ENCODE measurements at regions of chr1 and their contacts with region 1.

Region 1: GRCh38 chr1:227486559-227486958 is 76.8 kb upstream of the ZNF678 start:
- DNase-seq: peak; percentile 17
- ATAC-seq: no peak
- H3K4me3 ChIP-seq: no peak overlapping the region
- H3K4me3 Mint-ChIP-seq: no peak overlapping the region
- H3K27ac ChIP-seq: no peak overlapping the region
- H3K27ac Mint-ChIP-seq: no peak overlapping the region
- H3K4me1 ChIP-seq: no peaks in the 10 kb centered on the region
- H3K4me1 Mint-ChIP-seq: no peaks in the 10 kb centered on the region
- H3K27me3 ChIP-seq: no peaks in the 10 kb centered on the region
- H3K27me3 Mint-ChIP-seq: peaks cover 3% of the 10 kb centered on the region
- CTCF ChIP-seq: no peak

Region 2: GRCh38 chr1:227542143-227543120 is 55.9 kb after region 1 on chr1:
- CTCF ChIA-PET with region 1: interaction called, 8 read pairs
- POLR2A ChIA-PET with region 1: no interaction called
- intact Hi-C with region 1: loop called (anchors 1 kb)
- DNase-seq: peak; percentile 89
- ATAC-seq: peak; percentile 96
- H3K4me3 ChIP-seq: peak overlapping the region; percentile 7 to 69 (median 63)
- H3K4me3 Mint-ChIP-seq: peak overlapping the region; percentile 73
- H3K27ac ChIP-seq: peak overlapping the region in 1 of 2 donors; percentile 16
- H3K27ac Mint-ChIP-seq: no peak overlapping the region
- H3K4me1 ChIP-seq: peaks cover 0 to 16% of the 10 kb centered on the region in 2 donors
- H3K4me1 Mint-ChIP-seq: peaks cover 3% of the 10 kb centered on the region
- H3K27me3 ChIP-seq: no peaks in the 10 kb centered on the region
- H3K27me3 Mint-ChIP-seq: no peaks in the 10 kb centered on the region
- CTCF ChIP-seq: peak; percentile 99

Region 3: GRCh38 chr1:227954163-227954850 is 467.7 kb after region 1 on chr1:
- CTCF ChIA-PET with region 1: interaction called, 8 read pairs
- POLR2A ChIA-PET with region 1: no interaction called
- intact Hi-C with region 1: loop called (anchors 2 kb)
- DNase-seq: no peak
- ATAC-seq: no peak
- H3K4me3 ChIP-seq: no peak overlapping the region
- H3K4me3 Mint-ChIP-seq: no peak overlapping the region
- H3K27ac ChIP-seq: no peak overlapping the region
- H3K27ac Mint-ChIP-seq: no peak overlapping the region
- H3K4me1 ChIP-seq: no peaks in the 10 kb centered on the region
- H3K4me1 Mint-ChIP-seq: no peaks in the 10 kb centered on the region
- H3K27me3 ChIP-seq: peaks cover 0 to 17% (median 5%) of the 10 kb centered on the region in 4 experiments
- H3K27me3 Mint-ChIP-seq: peaks cover 48% of the 10 kb centered on the region
- CTCF ChIP-seq: no peak

Region 4: DNA sequence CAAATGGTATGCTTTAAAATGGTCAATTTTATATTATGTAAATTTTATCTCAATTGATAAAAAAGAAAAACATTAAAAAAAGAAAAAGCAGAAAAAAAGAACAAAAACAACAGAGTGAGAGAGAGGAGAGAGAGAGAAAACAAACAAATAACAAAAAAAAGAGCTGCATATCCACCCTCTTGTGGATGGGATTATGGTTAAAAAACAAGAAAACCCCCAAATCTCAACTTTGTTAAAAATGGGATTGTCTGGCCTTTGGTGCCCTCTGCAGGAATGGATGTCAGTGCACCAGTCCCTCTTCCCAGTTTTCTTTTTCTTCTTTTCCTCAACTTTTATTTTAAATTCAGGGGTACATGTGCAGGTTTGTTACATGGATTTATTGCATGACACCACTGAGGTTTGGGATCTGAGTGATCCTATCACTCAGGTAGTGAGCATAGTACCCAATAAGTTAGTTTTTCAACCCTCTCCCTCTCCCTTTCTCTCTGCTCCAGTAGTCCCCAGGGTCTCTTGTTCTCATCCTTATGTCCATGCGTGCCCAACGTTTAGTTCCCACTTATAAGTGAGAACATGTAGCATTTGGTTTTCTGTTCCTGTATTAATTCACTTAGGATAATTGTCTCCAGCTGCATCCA is 1028.8 kb after region 1 on chr1:
- CTCF ChIA-PET with region 1: interaction called, 8 read pairs
- POLR2A ChIA-PET with region 1: no interaction called
- intact Hi-C with region 1: loop called (anchors 5 kb)
- DNase-seq: peak; percentile 64
- ATAC-seq: peak; percentile 28
- H3K4me3 ChIP-seq: no peak overlapping the region
- H3K4me3 Mint-ChIP-seq: no peak overlapping the region
- H3K27ac ChIP-seq: no peak overlapping the region
- H3K27ac Mint-ChIP-seq: no peak overlapping the region
- H3K4me1 ChIP-seq: no peaks in the 10 kb centered on the region
- H3K4me1 Mint-ChIP-seq: no peaks in the 10 kb centered on the region
- H3K27me3 ChIP-seq: peaks cover 0 to 17% (median 4%) of the 10 kb centered on the region in 4 experiments
- H3K27me3 Mint-ChIP-seq: peaks cover 38% of the 10 kb centered on the region
- CTCF ChIP-seq: peak; percentile 82